ENCODE measurements at regions of chr22 and their contacts with region 1.

Region 1: DNA sequence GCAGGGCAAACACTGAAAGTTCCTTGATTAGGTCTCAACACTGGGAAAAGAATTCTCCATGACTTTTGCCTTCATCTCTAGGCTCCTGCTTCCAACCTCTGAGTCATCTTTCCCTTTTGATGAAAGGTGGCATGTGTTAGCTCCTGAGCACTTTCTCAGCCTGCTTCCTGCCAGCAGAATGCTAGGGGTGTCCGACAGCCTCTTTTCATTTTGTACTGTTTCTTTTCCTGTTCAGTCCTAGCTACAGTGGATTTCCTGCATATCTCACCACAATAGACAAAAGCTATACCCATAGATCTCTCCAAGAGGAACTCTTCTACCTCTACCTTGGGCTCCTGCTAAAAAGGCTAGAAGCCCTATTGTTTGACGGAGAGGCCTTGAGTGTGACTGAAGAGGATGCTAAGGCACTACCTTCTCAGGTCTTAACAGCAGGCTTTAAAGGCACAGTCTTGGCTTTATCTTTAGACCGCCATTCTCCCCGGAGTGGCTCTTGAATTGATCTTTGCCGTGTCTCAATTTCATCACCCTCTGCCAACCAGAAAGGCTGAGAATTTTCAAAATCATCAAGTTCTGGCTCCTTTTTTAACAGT is 145.5 kb downstream of the RBFOX2 start:
- DNase-seq: peak; percentile 31
- ATAC-seq: peak; percentile 83
- H3K4me3 ChIP-seq: peak overlapping the region in 1 of 2 experiments; percentile 3; a peak in 2 of 4 replicates
- H3K27ac ChIP-seq: peak overlapping the region; percentile 29; the same call in 1 of the 2 replicates
- H3K4me1 ChIP-seq: peaks cover 26 to 40% of the 10 kb centered on the region in 2 experiments
- H3K27me3 ChIP-seq: no peaks in the 10 kb centered on the region
- CTCF ChIP-seq: no peak
- POLR2A ChIP-seq: no peak
- RAD21 ChIP-seq: no peak

Region 2: DNA sequence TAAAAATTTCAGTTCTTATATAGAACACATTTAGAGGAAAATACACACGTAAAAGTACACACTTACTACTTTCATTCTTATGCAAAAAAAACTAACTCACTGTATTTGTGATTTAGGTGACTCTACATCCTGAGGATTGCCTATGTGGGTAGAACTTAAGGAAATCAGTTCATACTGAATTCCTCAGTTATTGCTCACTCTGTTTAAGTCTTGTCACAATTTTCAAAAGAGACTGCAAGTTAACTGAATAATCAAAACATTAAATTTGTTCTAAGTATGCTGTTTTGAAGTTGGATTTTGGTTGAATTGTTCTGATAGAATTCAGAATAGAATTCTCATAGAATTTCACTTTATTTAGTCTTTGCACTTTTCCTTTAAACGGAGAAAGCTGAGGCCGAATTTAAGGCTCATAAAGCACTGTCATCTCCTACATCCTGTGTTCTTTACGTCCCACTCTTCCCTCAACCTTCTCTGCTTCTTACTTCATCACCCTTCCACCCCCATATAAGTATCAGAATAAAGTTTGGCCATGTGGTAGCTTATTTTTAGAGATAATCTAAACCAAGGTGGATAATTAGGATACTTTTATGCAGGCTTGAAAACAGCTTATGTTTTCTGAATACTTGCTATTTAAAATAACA is 105.7 kb before region 1 on chr22:
- CTCF ChIA-PET with region 1: no interaction called
- POLR2A ChIA-PET with region 1: no interaction called
- RAD21 ChIA-PET with region 1: no interaction called
- intact Hi-C with region 1: no loop called
- DNase-seq: no peak
- ATAC-seq: no peak
- H3K4me3 ChIP-seq: no peak overlapping the region
- H3K27ac ChIP-seq: no peak overlapping the region
- H3K4me1 ChIP-seq: peaks cover 0 to 11% of the 10 kb centered on the region in 2 experiments; a peak in 2 of 4 replicates
- H3K27me3 ChIP-seq: no peaks in the 10 kb centered on the region
- CTCF ChIP-seq: no peak
- POLR2A ChIP-seq: no peak
- RAD21 ChIP-seq: no peak

Region 3: GRCh38 chr22:35792506-35792905 is 90.6 kb before region 1 on chr22:
- CTCF ChIA-PET with region 1: no interaction called
- POLR2A ChIA-PET with region 1: no interaction called
- RAD21 ChIA-PET with region 1: no interaction called
- intact Hi-C with region 1: no loop called
- DNase-seq: no peak
- ATAC-seq: no peak
- H3K4me3 ChIP-seq: no peak overlapping the region
- H3K27ac ChIP-seq: no peak overlapping the region
- H3K4me1 ChIP-seq: no peaks in the 10 kb centered on the region
- H3K27me3 ChIP-seq: no peaks in the 10 kb centered on the region
- CTCF ChIP-seq: no peak
- POLR2A ChIP-seq: no peak
- RAD21 ChIP-seq: no peak

Region 4: GRCh38 chr22:35863432-35863831 is 19.7 kb before region 1 on chr22:
- CTCF ChIA-PET with region 1: no interaction called
- POLR2A ChIA-PET with region 1: no interaction called
- RAD21 ChIA-PET with region 1: no interaction called
- intact Hi-C with region 1: loop called (anchors 2 kb)
- DNase-seq: no peak
- ATAC-seq: no peak
- H3K4me3 ChIP-seq: no peak overlapping the region
- H3K27ac ChIP-seq: no peak overlapping the region
- H3K4me1 ChIP-seq: peaks cover 0 to under 1% of the 10 kb centered on the region in 2 experiments; a peak in 3 of 4 replicates
- H3K27me3 ChIP-seq: no peaks in the 10 kb centered on the region
- CTCF ChIP-seq: no peak
- POLR2A ChIP-seq: no peak
- RAD21 ChIP-seq: no peak